ENCODE measurements at regions of chr10 and their contacts with region 1.

Region 1: GRCh38 chr10:18293536-18294510 is 153.6 kb downstream of the CACNB2 start:
- DNase-seq: no peak
- H3K4me3 Mint-ChIP-seq: no peak overlapping the region
- H3K27ac Mint-ChIP-seq: no peak overlapping the region
- H3K4me1 Mint-ChIP-seq: no peaks in the 10 kb centered on the region
- H3K27me3 Mint-ChIP-seq: peaks cover 9% of the 10 kb centered on the region
- CTCF ChIP-seq: no peak

Region 2: GRCh38 chr10:18340496-18341051 is 46.8 kb after region 1 on chr10:
- CTCF ChIA-PET with region 1: no interaction called
- intact Hi-C with region 1: loop called (anchors 5 kb)
- DNase-seq: no peak
- H3K4me3 Mint-ChIP-seq: no peak overlapping the region
- H3K27ac Mint-ChIP-seq: no peak overlapping the region
- H3K4me1 Mint-ChIP-seq: no peaks in the 10 kb centered on the region
- H3K27me3 Mint-ChIP-seq: no peaks in the 10 kb centered on the region
- CTCF ChIP-seq: no peak